BJ (cell line): ENCODE measurements at regions of chr15 and their contacts with region 1.

Region 1: GRCh38 chr15:31344823-31345605 is 18.4 kb downstream of the KLF13 start:
- DNase-seq: no peak
- H3K4me3 ChIP-seq: no peak overlapping the region
- H3K27me3 ChIP-seq: no peaks in the 10 kb centered on the region
- CTCF ChIP-seq: no peak

Region 2: DNA sequence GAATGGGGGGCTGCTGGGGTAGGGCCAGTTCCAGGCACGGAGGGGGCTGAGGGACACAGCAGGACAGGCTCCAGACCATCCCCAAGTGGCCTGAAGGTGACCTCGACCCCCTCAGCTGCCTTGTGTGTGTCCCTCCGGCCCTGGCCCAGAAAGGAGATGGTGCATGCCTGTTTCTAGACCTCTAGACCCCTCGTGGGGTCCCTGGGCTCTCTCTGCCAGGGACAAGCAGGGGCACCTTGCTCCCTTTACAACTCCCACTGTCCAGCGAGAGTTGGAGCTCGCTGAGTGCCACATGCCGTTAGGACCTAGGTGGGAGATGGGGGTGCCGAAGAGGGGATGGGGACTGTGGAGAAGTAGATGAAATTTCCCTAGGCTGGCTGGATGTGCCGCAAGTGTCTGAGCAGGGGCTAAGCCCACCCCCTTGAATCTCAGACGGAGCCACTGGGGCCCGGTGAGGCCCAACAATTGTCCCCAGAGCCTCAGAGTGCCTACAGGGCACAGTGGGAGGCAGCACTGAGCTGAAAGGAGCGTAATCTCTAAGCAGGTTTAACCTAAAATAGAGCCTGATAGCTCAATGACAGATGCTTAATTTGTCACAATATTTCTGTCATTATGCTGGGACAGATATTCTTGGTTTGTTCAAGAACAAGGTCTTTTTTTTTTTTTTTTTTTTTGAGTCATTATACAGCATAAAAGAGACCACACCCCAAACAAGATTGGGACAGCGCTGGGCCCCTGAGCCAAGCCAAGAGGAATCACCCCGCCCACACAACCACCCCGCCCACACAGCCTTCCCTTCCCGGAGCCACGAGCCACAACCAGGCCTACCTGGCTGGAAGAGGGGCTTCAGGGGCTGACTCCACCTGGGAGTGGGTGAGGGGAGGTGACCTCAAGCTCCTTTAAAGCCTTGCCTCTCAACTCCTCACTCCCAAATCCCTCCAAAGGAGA is 42.0 kb before region 1 on chr15:
- CTCF ChIA-PET with region 1: no interaction called
- POLR2A ChIA-PET with region 1: no interaction called
- DNase-seq: no peak
- H3K4me3 ChIP-seq: no peak overlapping the region
- H3K27me3 ChIP-seq: peaks cover 6% of the 10 kb centered on the region; the same call in 1 of the 2 replicates
- CTCF ChIP-seq: no peak

Region 3: GRCh38 chr15:31442203-31443111 is 97.4 kb after region 1 on chr15:
- CTCF ChIA-PET with region 1: no interaction called
- POLR2A ChIA-PET with region 1: interaction called, 10 read pairs
- DNase-seq: peak; percentile 97
- H3K4me3 ChIP-seq: no peak overlapping the region
- H3K27me3 ChIP-seq: no peaks in the 10 kb centered on the region
- CTCF ChIP-seq: peak; percentile 53